Panc1 (cell line): ENCODE measurements at regions of chr20 and their contacts with region 1.

Region 1: GRCh38 chr20:19692685-19693119 is 65.4 kb upstream of the RIN2 start:
- DNase-seq: peak; percentile 53
- ATAC-seq: peak; percentile 70
- H3K4me3 ChIP-seq: peak overlapping the region in 1 of 2 experiments; percentile 31; a peak in 2 of 4 replicates
- H3K27ac ChIP-seq: peak overlapping the region; percentile 71
- H3K4me1 ChIP-seq: peaks cover 6% of the 10 kb centered on the region
- H3K27me3 ChIP-seq: no peaks in the 10 kb centered on the region
- CTCF ChIP-seq: peak; percentile 95

Region 2: GRCh38 chr20:19784511-19785172 is 91.9 kb after region 1 on chr20:
- CTCF ChIA-PET with region 1: no interaction called
- POLR2A ChIA-PET with region 1: no interaction called
- in situ Hi-C with region 1: no loop called
- intact Hi-C with region 1: loop called (anchors 5 kb)
- DNase-seq: peak; percentile 74
- ATAC-seq: peak; percentile 88
- H3K4me3 ChIP-seq: peak overlapping the region in 1 of 2 experiments; percentile 40; a peak in 2 of 4 replicates
- H3K27ac ChIP-seq: peak overlapping the region; percentile 65
- H3K4me1 ChIP-seq: peaks cover 42% of the 10 kb centered on the region
- H3K27me3 ChIP-seq: no peaks in the 10 kb centered on the region
- CTCF ChIP-seq: peak; percentile 85

Region 3: GRCh38 chr20:19802492-19803158 is 109.9 kb after region 1 on chr20:
- CTCF ChIA-PET with region 1: interaction called, 5 read pairs
- POLR2A ChIA-PET with region 1: no interaction called
- in situ Hi-C with region 1: no loop called
- intact Hi-C with region 1: loop called (anchors 5 kb)
- DNase-seq: no peak
- ATAC-seq: peak; percentile 92
- H3K4me3 ChIP-seq: no peak overlapping the region
- H3K27ac ChIP-seq: 0 out of 2 replicates have a peak overlapping the region, but pooled peaks have one; percentile 6
- H3K4me1 ChIP-seq: peaks cover 9% of the 10 kb centered on the region
- H3K27me3 ChIP-seq: no peaks in the 10 kb centered on the region
- CTCF ChIP-seq: peak; percentile 63

Region 4: DNA sequence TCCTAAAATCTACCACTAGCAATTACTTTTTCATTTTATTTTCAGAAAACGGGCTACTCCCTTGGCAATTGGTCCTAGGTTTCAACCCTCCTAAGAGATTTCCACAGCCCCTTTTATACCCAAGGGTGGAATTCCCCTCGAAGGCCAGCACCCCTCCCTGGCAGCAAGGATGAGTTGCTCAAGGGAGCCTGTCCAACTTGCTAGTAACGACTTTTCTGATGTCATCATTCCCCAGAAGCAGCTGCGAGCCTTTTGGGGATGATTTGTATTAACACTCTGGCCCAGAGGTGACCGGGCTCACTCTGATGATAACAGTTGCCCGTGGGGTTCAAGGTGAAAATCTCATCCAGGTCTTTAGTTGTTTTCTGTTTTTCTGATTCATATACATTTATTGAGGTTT is 293.7 kb after region 1 on chr20:
- CTCF ChIA-PET with region 1: no interaction called
- POLR2A ChIA-PET with region 1: no interaction called
- in situ Hi-C with region 1: no loop called
- intact Hi-C with region 1: loop called (anchors 5 kb)
- DNase-seq: no peak
- ATAC-seq: peak; percentile 77
- H3K4me3 ChIP-seq: peak overlapping the region in 1 of 2 experiments; percentile 22; a peak in 2 of 4 replicates
- H3K27ac ChIP-seq: peak overlapping the region; percentile 98
- H3K4me1 ChIP-seq: peaks cover 57% of the 10 kb centered on the region
- H3K27me3 ChIP-seq: no peaks in the 10 kb centered on the region
- CTCF ChIP-seq: no peak